Dorsolateral prefrontal cortex (tissue), 120 donors: ENCODE measurements at regions of chr15 and their contacts with region 1.

Region 1: GRCh38 chr15:63610200-63610841 is 13.1 kb downstream of the FBXL22 start:
- DNase-seq: peak; percentile 53 to 91 (median 77)
- H3K4me3 ChIP-seq: peak overlapping the region in 11 of 59 donors; percentile 1 to 27 (median 7)
- H3K27ac ChIP-seq: peak overlapping the region; percentile 74 to 97 (median 93)
- H3K27me3 ChIP-seq: no peaks in the 10 kb centered on the region
- CTCF ChIP-seq: peak; percentile 63 to 91 (median 82)

Region 2: DNA sequence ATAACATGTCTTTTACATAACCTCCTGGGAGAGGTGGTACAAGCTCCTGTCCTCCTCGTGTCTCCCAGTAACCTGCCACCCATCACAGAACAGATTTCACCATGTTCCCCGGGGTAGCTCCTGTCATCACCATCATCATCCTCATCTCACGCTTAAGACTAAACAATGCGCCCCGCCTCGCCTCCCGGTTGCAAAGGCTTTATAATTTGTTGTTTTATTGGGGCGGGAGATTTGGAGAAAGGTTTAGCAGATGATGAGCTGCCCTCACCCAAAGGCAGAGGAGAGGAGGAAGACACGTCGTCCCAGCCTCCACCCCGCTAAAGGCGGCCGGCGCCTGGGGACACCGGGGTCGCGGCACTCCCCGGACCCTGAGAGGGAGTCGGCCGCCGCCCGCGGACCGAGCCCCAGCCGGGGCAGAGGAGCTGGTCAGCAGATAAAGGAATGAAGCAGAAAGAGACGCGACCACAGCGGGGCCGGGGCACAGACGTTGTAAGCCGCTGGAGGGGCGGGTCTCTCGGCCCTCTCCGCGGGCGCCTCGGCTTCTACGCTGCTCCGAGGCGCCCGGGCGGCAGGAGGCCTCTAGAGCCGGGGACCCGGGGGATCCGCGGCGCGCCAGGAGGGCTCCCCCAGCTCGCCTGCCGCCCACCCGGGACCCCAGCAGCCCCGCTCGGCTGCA is 222.8 kb after region 1 on chr15:
- intact Hi-C with region 1: loop called in 1 of 2 experiments (anchors 5 kb)
- DNase-seq: peak in 5 of 10 donors; percentile 3 to 61 (median 32)
- H3K4me3 ChIP-seq: peak overlapping the region; percentile 54 to 98 (median 90)
- H3K27ac ChIP-seq: peak overlapping the region; percentile 28 to 97 (median 92)
- H3K27me3 ChIP-seq: no peaks in the 10 kb centered on the region
- CTCF ChIP-seq: no peak

Region 3: DNA sequence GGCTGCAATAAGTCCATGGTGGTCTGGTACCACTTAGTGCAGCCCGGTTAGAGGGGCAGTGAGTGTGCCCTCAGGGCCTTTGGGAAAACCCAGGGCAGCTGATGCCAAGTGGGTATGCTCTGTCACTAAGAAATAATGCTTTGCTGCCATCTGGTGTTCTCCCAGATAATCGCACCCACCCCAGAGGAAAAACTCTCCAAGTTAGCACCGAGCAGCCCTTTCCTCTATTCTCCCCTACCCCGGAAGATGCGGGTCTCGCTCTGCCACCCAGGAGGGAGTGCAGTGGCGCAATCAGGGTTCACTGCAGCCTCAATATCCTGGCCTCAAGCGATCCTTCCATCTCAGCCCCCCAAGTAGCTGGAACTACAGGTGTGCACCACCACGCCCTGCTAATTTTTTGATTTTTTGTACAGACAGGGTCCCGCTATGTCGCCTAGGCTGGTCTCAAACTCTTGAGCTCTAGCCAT is 457.3 kb after region 1 on chr15:
- intact Hi-C with region 1: loop called (anchors 2 to 10 kb)
- DNase-seq: peak in 6 of 10 donors; percentile 59 to 75 (median 65)
- H3K4me3 ChIP-seq: peak overlapping the region in 2 of 59 donors; percentile 16 to 27
- H3K27ac ChIP-seq: no peak overlapping the region
- H3K27me3 ChIP-seq: no peaks in the 10 kb centered on the region
- CTCF ChIP-seq: peak; percentile 69 to 96 (median 89)